GM12878 (cell line): ENCODE measurements at regions of chr5 and their contacts with region 1.

Region 1: GRCh38 chr5:95075111-95075510 is 209.8 kb downstream of the MCTP1 start:
- DNase-seq: no peak
- ATAC-seq: peak; percentile 34
- H3K4me3 ChIP-seq: peak overlapping the region; percentile 9; the same call in 1 of the 2 replicates
- H3K27ac ChIP-seq: peak overlapping the region; percentile 70
- H3K4me1 ChIP-seq: peaks cover 30% of the 10 kb centered on the region
- H3K27me3 ChIP-seq: no peaks in the 10 kb centered on the region
- CTCF ChIP-seq: no peak
- EP300 ChIP-seq: no peak
- POLR2A ChIP-seq: no peak
- RAD21 ChIP-seq: no peak

Region 2: DNA sequence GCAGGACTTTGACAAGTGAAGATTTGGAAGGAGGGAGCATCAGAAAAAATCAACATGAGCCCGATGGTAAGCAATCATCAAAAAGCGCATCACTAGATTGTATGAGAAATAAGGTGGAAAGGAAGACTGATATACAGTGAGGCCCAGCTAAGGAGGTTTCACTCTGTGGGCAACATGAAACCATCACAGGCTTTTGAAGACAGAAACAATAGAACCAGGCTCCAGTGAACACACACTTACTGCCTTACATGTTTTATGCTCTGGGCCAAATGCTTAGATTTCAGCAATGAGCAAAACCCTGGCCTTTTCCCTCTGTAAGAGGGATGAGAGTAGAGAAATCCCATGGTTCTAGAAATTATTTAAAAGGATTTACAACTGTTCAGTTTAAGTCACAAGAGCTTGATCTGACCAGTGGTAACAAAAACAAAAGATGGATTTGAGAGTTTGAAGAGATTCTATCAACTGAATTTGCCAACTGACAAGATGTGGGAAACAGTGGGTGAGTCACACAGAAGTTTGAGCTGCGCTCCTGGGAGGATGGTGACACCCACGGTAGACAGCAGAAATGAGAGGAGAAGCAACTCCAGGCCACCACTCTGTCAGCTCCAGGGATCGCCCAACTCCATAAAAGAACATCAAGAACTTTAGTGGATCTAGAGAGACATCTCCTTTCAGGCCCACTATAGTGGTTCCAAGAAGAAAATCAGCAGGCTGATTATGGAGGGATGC is 52.0 kb before region 1 on chr5:
- CTCF ChIA-PET with region 1: interaction called, 5 read pairs
- POLR2A ChIA-PET with region 1: interaction called, 5 read pairs
- RAD21 ChIA-PET with region 1: interaction called, 11 read pairs
- SMC1A ChIA-PET with region 1: interaction called, 64 read pairs
- in situ Hi-C with region 1: no loop called
- intact Hi-C with region 1: loop called (anchors 2 kb)
- DNase-seq: peak; percentile 66
- ATAC-seq: peak; percentile 89
- H3K4me3 ChIP-seq: peak overlapping the region; percentile 32; the same call in 1 of the 2 replicates
- H3K27ac ChIP-seq: peak overlapping the region; percentile 40
- H3K4me1 ChIP-seq: peaks cover 30% of the 10 kb centered on the region
- H3K27me3 ChIP-seq: no peaks in the 10 kb centered on the region
- CTCF ChIP-seq: no peak
- EP300 ChIP-seq: no peak
- POLR2A ChIP-seq: no peak
- RAD21 ChIP-seq: no peak

Region 3: GRCh38 chr5:95063492-95063891 is 11.6 kb before region 1 on chr5:
- CTCF ChIA-PET with region 1: interaction called, 7 read pairs
- POLR2A ChIA-PET with region 1: interaction called, 24 read pairs
- RAD21 ChIA-PET with region 1: interaction called, 86 read pairs
- SMC1A ChIA-PET with region 1: interaction called, 28 read pairs
- in situ Hi-C with region 1: no loop called
- intact Hi-C with region 1: no loop called
- DNase-seq: no peak
- ATAC-seq: no peak
- H3K4me3 ChIP-seq: no peak overlapping the region
- H3K27ac ChIP-seq: no peak overlapping the region
- H3K4me1 ChIP-seq: peaks cover 1% of the 10 kb centered on the region
- H3K27me3 ChIP-seq: no peaks in the 10 kb centered on the region
- CTCF ChIP-seq: no peak
- EP300 ChIP-seq: no peak
- POLR2A ChIP-seq: no peak
- RAD21 ChIP-seq: no peak

Region 4: DNA sequence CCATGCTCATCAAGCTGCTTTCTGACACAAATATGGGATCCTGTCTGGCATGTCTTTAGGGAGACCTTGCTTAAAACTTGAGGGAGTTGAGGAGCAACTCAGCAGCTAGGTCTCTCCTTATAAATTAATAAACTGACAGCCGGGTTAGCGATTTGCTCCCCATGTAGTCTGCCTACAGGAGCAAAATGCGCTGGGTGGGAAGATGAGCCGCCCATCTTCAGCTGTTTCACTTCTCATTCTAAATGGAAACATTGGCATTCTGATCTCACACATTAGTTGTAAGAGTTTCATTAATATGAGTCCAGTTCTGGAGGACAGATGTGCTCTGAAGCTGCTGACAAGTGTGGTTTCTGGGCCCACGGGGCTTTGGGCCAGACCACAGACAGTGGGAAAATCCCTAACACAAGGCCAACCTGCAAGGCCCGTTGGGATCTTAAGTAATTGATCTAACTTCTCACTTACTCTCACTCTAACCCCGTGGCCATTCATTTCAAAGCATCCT is 12.8 kb after region 1 on chr5:
- CTCF ChIA-PET with region 1: interaction called, 25 read pairs
- POLR2A ChIA-PET with region 1: interaction called, 16 read pairs
- RAD21 ChIA-PET with region 1: interaction called, 86 read pairs
- SMC1A ChIA-PET with region 1: interaction called, 28 read pairs
- in situ Hi-C with region 1: no loop called
- intact Hi-C with region 1: no loop called
- DNase-seq: peak; percentile 85
- ATAC-seq: peak; percentile 90
- H3K4me3 ChIP-seq: peak overlapping the region; percentile 20; the same call in 1 of the 2 replicates
- H3K27ac ChIP-seq: peak overlapping the region; percentile 88
- H3K4me1 ChIP-seq: peaks cover 16% of the 10 kb centered on the region
- H3K27me3 ChIP-seq: no peaks in the 10 kb centered on the region
- CTCF ChIP-seq: no peak
- EP300 ChIP-seq: peak; percentile 83 to 86; a peak in 3 of 4 replicates
- POLR2A ChIP-seq: no peak
- RAD21 ChIP-seq: no peak